ENCODE measurements at regions of chr4 and their contacts with region 1.

Region 1: GRCh38 chr4:113106108-113106507 is 56.7 kb downstream of the ANK2 start:
- DNase-seq: peak; percentile 57
- ATAC-seq: no peak; the same call in 1 of the 2 replicates
- H3K4me3 ChIP-seq: no peak overlapping the region
- H3K27ac ChIP-seq: no peak overlapping the region
- H3K4me1 ChIP-seq: peaks cover 5% of the 10 kb centered on the region; the same call in 1 of the 2 replicates
- H3K27me3 ChIP-seq: no peaks in the 10 kb centered on the region
- CTCF ChIP-seq: peak; percentile 61

Region 2: DNA sequence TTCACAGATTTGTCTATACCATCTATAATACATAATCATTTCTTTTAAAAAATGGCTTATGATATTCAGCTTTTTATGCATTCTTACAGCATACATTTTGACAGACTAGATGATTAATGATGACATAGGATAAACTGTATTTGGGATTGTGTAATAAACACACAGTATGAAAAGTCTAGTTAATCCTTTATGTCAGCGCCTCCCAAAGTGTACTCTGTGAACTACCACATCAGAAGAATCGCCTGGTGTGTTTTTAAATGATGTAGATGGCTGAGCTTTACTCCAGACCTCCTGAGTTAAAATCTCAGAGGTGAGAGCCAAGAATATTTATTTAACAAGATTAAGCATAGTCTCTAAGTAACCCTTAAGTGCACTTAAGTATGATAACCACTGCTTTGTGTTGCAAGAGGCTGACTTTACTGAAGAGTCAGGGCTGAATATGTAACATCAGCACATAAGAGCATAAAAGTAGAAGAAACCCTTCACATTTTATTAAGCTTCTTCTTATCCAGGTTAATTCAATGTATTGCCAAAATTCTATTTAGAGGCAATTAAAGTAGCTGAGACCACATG is 47.5 kb after region 1 on chr4:
- CTCF ChIA-PET with region 1: no interaction called
- POLR2A ChIA-PET with region 1: no interaction called
- intact Hi-C with region 1: loop called (anchors 1 kb)
- DNase-seq: peak; percentile 51
- ATAC-seq: peak; percentile 40
- H3K4me3 ChIP-seq: no peak overlapping the region
- H3K27ac ChIP-seq: no peak overlapping the region
- H3K4me1 ChIP-seq: no peaks in the 10 kb centered on the region
- H3K27me3 ChIP-seq: no peaks in the 10 kb centered on the region
- CTCF ChIP-seq: peak; percentile 57

Region 3: GRCh38 chr4:113179996-113180395 is 73.9 kb after region 1 on chr4:
- CTCF ChIA-PET with region 1: interaction called, 6 read pairs
- POLR2A ChIA-PET with region 1: no interaction called
- intact Hi-C with region 1: loop called (anchors 1 kb)
- DNase-seq: no peak
- ATAC-seq: peak; percentile 49
- H3K4me3 ChIP-seq: no peak overlapping the region
- H3K27ac ChIP-seq: no peak overlapping the region
- H3K4me1 ChIP-seq: no peaks in the 10 kb centered on the region
- H3K27me3 ChIP-seq: no peaks in the 10 kb centered on the region
- CTCF ChIP-seq: no peak

Region 4: DNA sequence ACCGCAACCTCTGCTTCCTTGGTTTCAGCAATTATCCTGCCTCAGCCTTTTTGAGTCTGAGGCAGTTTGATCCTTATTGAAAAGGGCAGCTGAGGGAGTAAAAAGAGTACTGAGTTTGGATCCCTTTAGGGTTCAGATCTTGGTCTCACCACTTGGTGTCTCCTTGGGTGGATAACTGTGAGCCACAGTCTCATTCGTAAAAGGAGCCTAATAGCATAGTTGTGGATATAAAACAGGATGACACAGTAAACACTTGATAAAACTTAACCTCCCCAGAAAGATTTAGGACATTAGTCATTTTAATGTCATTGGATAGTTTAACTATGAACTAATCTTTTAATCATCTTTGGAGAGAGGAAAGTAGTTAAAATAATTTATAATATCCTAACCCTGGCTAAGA is 116.4 kb after region 1 on chr4:
- CTCF ChIA-PET with region 1: no interaction called
- POLR2A ChIA-PET with region 1: no interaction called
- intact Hi-C with region 1: loop called (anchors 1 kb)
- DNase-seq: peak; percentile 27
- ATAC-seq: peak; percentile 67
- H3K4me3 ChIP-seq: no peak overlapping the region
- H3K27ac ChIP-seq: no peak overlapping the region
- H3K4me1 ChIP-seq: no peaks in the 10 kb centered on the region; the same call in 1 of the 2 replicates
- H3K27me3 ChIP-seq: no peaks in the 10 kb centered on the region
- CTCF ChIP-seq: no peak

Region 5: GRCh38 chr4:113278324-113278934 is 172.3 kb after region 1 on chr4:
- CTCF ChIA-PET with region 1: no interaction called
- POLR2A ChIA-PET with region 1: no interaction called
- intact Hi-C with region 1: loop called (anchors 2 kb)
- DNase-seq: peak; percentile 74
- ATAC-seq: peak; percentile 88
- H3K4me3 ChIP-seq: no peak overlapping the region
- H3K27ac ChIP-seq: no peak overlapping the region
- H3K4me1 ChIP-seq: no peaks in the 10 kb centered on the region
- H3K27me3 ChIP-seq: no peaks in the 10 kb centered on the region
- CTCF ChIP-seq: peak; percentile 87